Mammary epithelial cell (primary cell): ENCODE measurements at regions of chr14 and their contacts with region 1.

Region 1: DNA sequence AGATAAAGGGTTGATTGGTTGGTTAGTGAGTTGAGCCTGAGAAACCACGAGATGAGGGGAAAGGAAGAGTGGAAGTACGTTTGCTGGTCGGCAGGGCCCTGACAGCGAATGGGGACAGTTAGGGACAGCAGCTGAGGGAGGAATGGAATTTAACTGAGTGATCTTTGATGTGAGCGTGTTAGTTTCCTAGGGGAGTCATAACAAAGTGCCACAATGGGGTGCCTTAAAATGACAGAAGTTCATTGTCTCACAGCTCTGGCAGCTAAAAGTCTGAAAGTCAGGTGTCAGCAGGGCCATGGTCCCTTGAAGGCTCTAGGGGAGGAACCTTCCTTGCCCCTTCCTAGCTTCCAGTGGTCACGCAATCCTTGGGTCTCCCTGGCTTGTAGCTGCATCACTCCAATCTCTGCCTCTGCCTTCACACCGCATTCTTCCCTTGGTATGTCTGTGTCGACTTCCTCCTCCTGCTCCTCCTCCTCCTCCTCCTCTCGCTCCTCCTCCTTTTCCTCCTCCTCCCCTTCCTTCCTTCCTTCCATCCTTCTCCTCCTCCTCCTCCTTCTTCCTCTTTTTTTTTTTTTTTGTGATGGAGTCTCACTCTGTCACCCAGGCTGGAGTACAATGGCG is 26.0 kb upstream of the RIN3 start:
- DNase-seq: no peak
- H3K4me3 ChIP-seq: no peak overlapping the region
- H3K27ac ChIP-seq: no peak overlapping the region
- H3K4me1 ChIP-seq: no peaks in the 10 kb centered on the region
- H3K27me3 ChIP-seq: no peaks in the 10 kb centered on the region
- CTCF ChIP-seq: no peak

Region 2: GRCh38 chr14:92373336-92373735 is 114.3 kb before region 1 on chr14:
- CTCF ChIA-PET with region 1: no interaction called
- dilution Hi-C with region 1: loop called (anchors 5 kb)
- in situ Hi-C with region 1: no loop called
- intact Hi-C with region 1: no loop called
- DNase-seq: no peak
- H3K4me3 ChIP-seq: no peak overlapping the region
- H3K27ac ChIP-seq: no peak overlapping the region
- H3K4me1 ChIP-seq: no peaks in the 10 kb centered on the region
- H3K27me3 ChIP-seq: no peaks in the 10 kb centered on the region
- CTCF ChIP-seq: no peak

Region 3: DNA sequence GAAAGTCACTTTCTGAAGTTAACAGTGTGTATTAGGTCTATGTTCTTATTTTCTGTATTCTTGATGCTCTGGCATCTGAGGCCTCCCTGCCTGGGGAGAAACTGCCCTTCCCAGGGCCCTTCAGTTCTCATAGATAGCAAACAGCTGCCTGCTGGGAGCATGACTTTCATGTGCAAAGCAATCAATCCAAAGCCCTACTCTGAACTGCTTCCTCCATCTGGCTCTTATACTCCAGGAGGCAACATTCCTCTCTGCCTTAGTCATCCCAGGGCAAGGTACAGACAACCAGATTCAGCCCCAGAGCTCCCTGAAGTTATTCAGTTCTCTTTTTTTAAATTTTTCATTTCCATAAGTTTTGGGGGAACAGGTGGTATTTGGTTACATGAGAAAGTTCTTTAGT is 15.7 kb before region 1 on chr14:
- CTCF ChIA-PET with region 1: no interaction called
- dilution Hi-C with region 1: no loop called
- in situ Hi-C with region 1: no loop called
- intact Hi-C with region 1: no loop called
- DNase-seq: peak; percentile 76
- H3K4me3 ChIP-seq: no peak overlapping the region
- H3K27ac ChIP-seq: no peak overlapping the region
- H3K4me1 ChIP-seq: peaks cover 25% of the 10 kb centered on the region
- H3K27me3 ChIP-seq: no peaks in the 10 kb centered on the region
- CTCF ChIP-seq: no peak